Activated CD4-positive, alpha-beta T cell treated with anti-CD3 and anti-CD28 coated beads for 36 hours (primary cell): ENCODE measurements at regions of chr15 and their contacts with region 1.

Region 1: GRCh38 chr15:45118131-45118588 is 4.0 kb downstream of the DUOXA2 start:
- DNase-seq: peak; percentile 92
- ATAC-seq: peak; percentile 99
- H3K4me3 Mint-ChIP-seq: peak overlapping the region; percentile 13
- H3K27ac Mint-ChIP-seq: no peak overlapping the region
- H3K4me1 Mint-ChIP-seq: peaks cover 27% of the 10 kb centered on the region
- H3K27me3 Mint-ChIP-seq: peaks cover 46% of the 10 kb centered on the region

Region 2: DNA sequence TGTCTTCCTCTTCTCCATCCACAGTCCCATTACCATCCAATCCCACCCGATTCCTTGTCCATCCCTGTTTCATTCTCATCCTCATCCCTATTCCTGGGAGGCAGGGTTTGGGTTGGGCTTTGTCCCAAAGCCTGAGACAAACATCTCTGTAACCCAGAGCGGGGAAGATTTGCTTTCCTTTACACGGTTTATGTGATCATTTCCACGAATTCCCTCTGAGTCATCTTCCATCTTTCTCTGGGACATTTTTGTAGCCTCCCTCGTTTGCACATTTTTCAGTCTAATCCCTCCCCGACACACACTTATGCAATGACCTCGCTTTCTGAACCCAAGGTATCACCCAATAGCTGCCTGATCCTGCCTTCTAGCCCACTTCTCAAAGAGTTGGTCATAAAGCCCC is 27.0 kb before region 1 on chr15:
- CTCF ChIA-PET with region 1: interaction called, 13 read pairs
- POLR2A ChIA-PET with region 1: no interaction called
- intact Hi-C with region 1: no loop called
- DNase-seq: no peak
- ATAC-seq: no peak
- H3K4me3 Mint-ChIP-seq: no peak overlapping the region
- H3K27ac Mint-ChIP-seq: no peak overlapping the region
- H3K4me1 Mint-ChIP-seq: no peaks in the 10 kb centered on the region
- H3K27me3 Mint-ChIP-seq: peaks cover 16% of the 10 kb centered on the region

Region 3: GRCh38 chr15:45136378-45136764 is 18.2 kb after region 1 on chr15:
- CTCF ChIA-PET with region 1: interaction called, 29 read pairs
- POLR2A ChIA-PET with region 1: no interaction called
- intact Hi-C with region 1: loop called in 1 of 2 experiments (anchors 2 kb)
- DNase-seq: peak; percentile 43
- ATAC-seq: no peak
- H3K4me3 Mint-ChIP-seq: peak overlapping the region; percentile 5
- H3K27ac Mint-ChIP-seq: no peak overlapping the region
- H3K4me1 Mint-ChIP-seq: peaks cover 9% of the 10 kb centered on the region
- H3K27me3 Mint-ChIP-seq: peaks cover 29% of the 10 kb centered on the region

Region 4: DNA sequence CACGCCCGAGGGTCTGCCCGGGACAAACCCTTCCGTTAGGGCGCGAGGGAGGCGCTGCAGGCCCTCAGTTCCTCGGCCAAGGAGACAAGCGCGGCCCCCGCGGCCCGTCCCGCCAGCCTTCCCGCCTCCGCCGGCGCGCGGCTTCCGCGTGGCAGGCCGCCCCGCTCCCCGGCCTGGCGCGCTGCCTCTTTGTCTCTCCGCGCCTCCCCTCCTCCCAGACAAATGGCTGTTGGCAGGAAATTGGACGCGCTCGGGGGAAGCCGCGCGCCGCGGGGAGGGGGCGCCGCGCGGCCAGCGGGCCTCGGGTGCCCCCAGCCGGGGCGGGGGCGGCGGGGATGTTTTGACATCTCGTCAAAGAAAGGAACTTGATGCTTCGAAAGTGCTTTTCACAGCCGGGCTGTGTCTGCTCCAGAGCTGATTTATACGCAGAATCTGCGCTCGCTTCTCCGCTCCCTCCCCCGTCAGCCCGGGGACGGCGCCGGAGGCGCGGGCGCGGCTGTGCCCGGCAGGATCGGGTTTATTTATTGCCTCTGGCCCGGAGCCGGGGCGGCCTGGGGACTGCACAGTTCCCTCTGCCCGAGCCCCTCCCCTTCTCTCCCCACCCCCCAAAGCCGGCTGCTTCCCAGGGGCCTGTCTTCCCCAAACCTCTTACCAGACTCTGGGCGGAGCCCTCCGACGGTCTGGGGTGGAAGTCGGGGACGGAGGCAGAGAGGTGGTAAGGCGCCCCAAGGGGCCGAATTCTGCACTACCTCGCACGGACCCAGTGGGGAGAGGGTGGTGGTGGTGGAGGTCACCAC is 48.9 kb after region 1 on chr15:
- CTCF ChIA-PET with region 1: interaction called, 18 read pairs
- POLR2A ChIA-PET with region 1: no interaction called
- intact Hi-C with region 1: loop called in 1 of 2 experiments (anchors 1 kb)
- DNase-seq: peak; percentile 91
- ATAC-seq: peak; percentile 93
- H3K4me3 Mint-ChIP-seq: peak overlapping the region; percentile 69
- H3K27ac Mint-ChIP-seq: peak overlapping the region; percentile 77
- H3K4me1 Mint-ChIP-seq: peaks cover 9% of the 10 kb centered on the region
- H3K27me3 Mint-ChIP-seq: no peaks in the 10 kb centered on the region

Region 5: GRCh38 chr15:45378149-45378912 is 260.2 kb after region 1 on chr15 and contains the start of gene GATM:
- CTCF ChIA-PET with region 1: interaction called, 5 read pairs
- POLR2A ChIA-PET with region 1: no interaction called
- intact Hi-C with region 1: loop called in 1 of 2 experiments (anchors 5 kb)
- DNase-seq: peak; percentile 75
- ATAC-seq: peak; percentile 88
- H3K4me3 Mint-ChIP-seq: peak within 1 kb of the TSS; percentile 66
- H3K27ac Mint-ChIP-seq: peak within 1 kb of the TSS; percentile 26
- H3K4me1 Mint-ChIP-seq: peaks cover 12% of the 10 kb centered on the region
- H3K27me3 Mint-ChIP-seq: peaks cover 29% of the 10 kb centered on the region
- total RNA-seq, gene GATM: 2.5 to 3.4 TPM

Region 6: GRCh38 chr15:46034755-46035154 is 916.6 kb after region 1 on chr15:
- CTCF ChIA-PET with region 1: no interaction called
- POLR2A ChIA-PET with region 1: no interaction called
- intact Hi-C with region 1: no loop called
- DNase-seq: no peak
- ATAC-seq: no peak
- H3K4me3 Mint-ChIP-seq: no peak overlapping the region
- H3K27ac Mint-ChIP-seq: no peak overlapping the region
- H3K4me1 Mint-ChIP-seq: no peaks in the 10 kb centered on the region
- H3K27me3 Mint-ChIP-seq: no peaks in the 10 kb centered on the region